Activated CD4-positive, alpha-beta memory T cell treated with anti-CD3 and anti-CD28 coated beads, Interleukin-2, amount 10 ng/mL, durations not matched to agents 7 days and 5 days (primary cell): ENCODE measurements at regions of chr17 and their contacts with region 1.

Region 1: DNA sequence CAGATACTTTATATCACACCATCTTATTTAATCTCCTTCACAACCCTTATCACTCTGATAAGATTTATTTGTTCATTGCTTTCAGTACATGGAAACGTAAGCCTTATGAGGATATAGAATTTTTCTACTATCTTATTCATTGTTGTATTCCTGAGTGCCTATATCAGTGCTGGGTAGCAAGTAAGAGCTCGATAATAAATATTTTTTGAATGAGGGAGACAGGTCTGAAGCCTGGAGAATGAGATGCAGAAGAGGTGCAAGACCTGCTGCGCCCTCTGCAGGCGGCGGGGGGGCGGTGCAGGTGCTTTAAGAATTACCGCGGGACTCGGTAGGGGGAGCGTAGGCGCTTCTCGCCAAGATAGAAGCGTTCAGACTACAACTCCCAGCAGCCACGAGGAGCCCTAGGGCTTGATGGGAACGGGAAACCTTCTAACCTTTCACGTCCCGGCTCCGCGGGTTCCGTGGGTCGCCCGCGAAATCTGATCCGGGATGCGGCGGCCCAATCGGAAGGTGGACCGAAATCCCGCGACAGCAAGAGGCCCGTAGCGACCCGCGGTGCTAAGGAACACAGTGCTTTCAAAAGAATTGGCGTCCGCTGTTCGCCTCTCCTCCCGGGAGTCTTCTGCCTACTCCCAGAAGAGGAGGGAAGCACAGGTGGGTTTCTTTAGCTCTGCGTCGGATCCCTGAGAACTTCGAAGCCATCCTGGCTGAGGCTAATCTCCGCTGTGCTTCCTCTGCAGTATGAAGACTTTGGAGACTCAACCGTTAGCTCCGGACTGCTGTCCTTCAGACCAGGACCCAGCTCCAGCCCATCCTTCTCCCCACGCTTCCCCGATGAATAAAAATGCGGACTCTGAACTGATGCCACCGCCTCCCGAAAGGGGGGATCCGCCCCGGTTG is at the start of gene WRAP53:
- DNase-seq: peak; percentile 97
- H3K4me3 Mint-ChIP-seq: peak within 1 kb of the TSS; percentile 94
- H3K27ac Mint-ChIP-seq: peak within 1 kb of the TSS; percentile 96
- H3K4me1 Mint-ChIP-seq: peaks cover 39% of the 10 kb centered on the region
- H3K27me3 Mint-ChIP-seq: no peaks in the 10 kb centered on the region
- total RNA-seq, gene WRAP53: 18.6 to 18.8 TPM

Region 2: DNA sequence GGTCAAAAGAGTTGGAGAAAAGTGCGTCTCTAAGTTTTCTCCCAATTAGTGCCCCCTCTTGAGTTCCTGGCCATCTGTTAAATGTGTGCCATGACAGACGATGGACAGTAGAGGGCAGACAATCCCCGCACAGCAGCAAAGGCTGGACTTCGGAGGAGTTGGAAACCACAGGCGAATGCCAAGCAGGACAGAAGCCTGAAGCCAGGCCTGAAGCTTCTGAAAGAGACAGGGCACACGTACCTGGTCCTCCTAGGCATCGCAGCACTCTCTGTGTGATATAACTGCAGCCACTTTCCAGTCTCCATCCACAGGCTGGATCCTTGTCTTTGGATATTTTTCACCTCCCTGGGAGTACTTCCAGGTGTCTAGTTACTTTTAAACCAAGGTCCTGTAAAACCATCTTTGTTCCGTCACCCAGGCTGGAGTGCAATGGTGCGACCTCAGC is 1022.1 kb before region 1 on chr17:
- CTCF ChIA-PET with region 1: no interaction called
- POLR2A ChIA-PET with region 1: no interaction called
- DNase-seq: peak; percentile 58
- H3K4me3 Mint-ChIP-seq: no peak overlapping the region
- H3K27ac Mint-ChIP-seq: no peak overlapping the region
- H3K4me1 Mint-ChIP-seq: peaks cover 14% of the 10 kb centered on the region
- H3K27me3 Mint-ChIP-seq: no peaks in the 10 kb centered on the region

Region 3: GRCh38 chr17:7239091-7240027 is 448.8 kb before region 1 on chr17 and contains the start of gene PHF23:
- CTCF ChIA-PET with region 1: no interaction called
- POLR2A ChIA-PET with region 1: interaction called, 12 read pairs
- DNase-seq: peak; percentile 98
- H3K4me3 Mint-ChIP-seq: peak within 1 kb of the TSS; percentile 87
- H3K27ac Mint-ChIP-seq: peak within 1 kb of the TSS; percentile 92
- H3K4me1 Mint-ChIP-seq: peaks cover 71% of the 10 kb centered on the region
- H3K27me3 Mint-ChIP-seq: no peaks in the 10 kb centered on the region
- total RNA-seq, gene PHF23: 45.9 to 53.1 TPM

Region 4: GRCh38 chr17:7484067-7484918 is 203.9 kb before region 1 on chr17 and contains the start of gene POLR2A:
- CTCF ChIA-PET with region 1: no interaction called
- POLR2A ChIA-PET with region 1: interaction called, 44 read pairs
- DNase-seq: peak; percentile 97
- H3K4me3 Mint-ChIP-seq: peak within 1 kb of the TSS; percentile 87
- H3K27ac Mint-ChIP-seq: peak within 1 kb of the TSS; percentile 98
- H3K4me1 Mint-ChIP-seq: peaks cover 66% of the 10 kb centered on the region
- H3K27me3 Mint-ChIP-seq: no peaks in the 10 kb centered on the region
- total RNA-seq, gene POLR2A: 169 to 172 TPM

Region 5: GRCh38 chr17:7589204-7589868 is 98.8 kb before region 1 on chr17:
- CTCF ChIA-PET with region 1: interaction called, 29 read pairs
- POLR2A ChIA-PET with region 1: interaction called, 129 read pairs
- DNase-seq: peak; percentile 71
- H3K4me3 Mint-ChIP-seq: no peak overlapping the region
- H3K27ac Mint-ChIP-seq: peak overlapping the region; percentile 26
- H3K4me1 Mint-ChIP-seq: peaks cover 22% of the 10 kb centered on the region
- H3K27me3 Mint-ChIP-seq: no peaks in the 10 kb centered on the region

Region 6: GRCh38 chr17:7650509-7651096 is 37.6 kb before region 1 on chr17 and contains the start of gene ATP1B2:
- CTCF ChIA-PET with region 1: interaction called, 5 read pairs
- POLR2A ChIA-PET with region 1: interaction called, 26 read pairs
- DNase-seq: peak; percentile 75
- H3K4me3 Mint-ChIP-seq: peak within 1 kb of the TSS; percentile 63
- H3K27ac Mint-ChIP-seq: no peak within 1 kb of the TSS
- H3K4me1 Mint-ChIP-seq: peaks cover 17% of the 10 kb centered on the region
- H3K27me3 Mint-ChIP-seq: peaks cover 53% of the 10 kb centered on the region
- total RNA-seq, gene ATP1B2: 0.25 to 0.50 TPM

Region 7: DNA sequence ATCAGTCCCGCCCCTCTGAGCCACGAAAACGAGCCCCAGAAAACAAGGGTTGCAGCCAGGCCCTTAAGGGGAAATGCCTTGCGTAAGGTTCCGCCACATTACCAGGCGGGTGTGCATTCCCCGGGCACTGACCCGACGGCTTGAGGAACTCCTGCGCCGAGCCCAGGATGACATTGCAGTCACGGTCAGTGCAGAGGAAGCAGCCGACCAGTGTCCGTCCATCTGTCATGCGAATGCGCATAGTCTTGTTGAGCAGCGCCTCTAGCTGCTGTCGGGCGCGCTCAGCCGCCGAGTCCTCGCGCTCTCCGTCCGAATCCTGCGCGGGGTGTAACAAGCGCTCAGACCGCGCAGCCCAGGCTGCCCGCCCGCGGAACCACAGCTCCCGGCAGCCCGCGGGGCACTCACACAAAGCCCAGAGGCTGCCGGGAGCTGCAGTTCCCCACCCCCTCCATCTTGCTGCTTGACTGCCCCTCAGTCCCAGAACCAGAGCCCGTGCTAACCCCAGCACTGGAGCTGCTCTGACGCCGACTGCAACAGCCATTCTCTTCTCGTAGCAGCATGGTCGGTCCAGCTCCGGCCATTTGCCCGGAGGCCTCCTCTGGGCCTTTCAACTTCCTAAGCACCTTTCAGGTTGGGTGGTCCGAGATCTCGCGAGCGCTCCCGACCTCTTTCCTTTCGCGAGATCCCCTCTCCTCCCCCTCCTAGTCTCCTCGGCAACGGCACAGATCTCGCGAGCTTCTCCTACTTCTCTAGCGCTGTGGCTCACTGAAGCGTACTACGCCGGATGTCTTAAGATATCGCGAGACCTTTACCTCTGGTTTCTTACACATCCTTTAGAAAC is 168.9 kb after region 1 on chr17 and contains the start of gene NAA38:
- CTCF ChIA-PET with region 1: interaction called, 9 read pairs
- POLR2A ChIA-PET with region 1: interaction called, 20 read pairs
- DNase-seq: peak; percentile 97
- H3K4me3 Mint-ChIP-seq: no peak within 1 kb of the TSS
- H3K27ac Mint-ChIP-seq: no peak within 1 kb of the TSS
- H3K4me1 Mint-ChIP-seq: peaks cover 8% of the 10 kb centered on the region
- H3K27me3 Mint-ChIP-seq: no peaks in the 10 kb centered on the region
- total RNA-seq, gene NAA38: 69.8 to 76.9 TPM